ENCODE measurements at regions of chr5 and their contacts with region 1.

Region 1: DNA sequence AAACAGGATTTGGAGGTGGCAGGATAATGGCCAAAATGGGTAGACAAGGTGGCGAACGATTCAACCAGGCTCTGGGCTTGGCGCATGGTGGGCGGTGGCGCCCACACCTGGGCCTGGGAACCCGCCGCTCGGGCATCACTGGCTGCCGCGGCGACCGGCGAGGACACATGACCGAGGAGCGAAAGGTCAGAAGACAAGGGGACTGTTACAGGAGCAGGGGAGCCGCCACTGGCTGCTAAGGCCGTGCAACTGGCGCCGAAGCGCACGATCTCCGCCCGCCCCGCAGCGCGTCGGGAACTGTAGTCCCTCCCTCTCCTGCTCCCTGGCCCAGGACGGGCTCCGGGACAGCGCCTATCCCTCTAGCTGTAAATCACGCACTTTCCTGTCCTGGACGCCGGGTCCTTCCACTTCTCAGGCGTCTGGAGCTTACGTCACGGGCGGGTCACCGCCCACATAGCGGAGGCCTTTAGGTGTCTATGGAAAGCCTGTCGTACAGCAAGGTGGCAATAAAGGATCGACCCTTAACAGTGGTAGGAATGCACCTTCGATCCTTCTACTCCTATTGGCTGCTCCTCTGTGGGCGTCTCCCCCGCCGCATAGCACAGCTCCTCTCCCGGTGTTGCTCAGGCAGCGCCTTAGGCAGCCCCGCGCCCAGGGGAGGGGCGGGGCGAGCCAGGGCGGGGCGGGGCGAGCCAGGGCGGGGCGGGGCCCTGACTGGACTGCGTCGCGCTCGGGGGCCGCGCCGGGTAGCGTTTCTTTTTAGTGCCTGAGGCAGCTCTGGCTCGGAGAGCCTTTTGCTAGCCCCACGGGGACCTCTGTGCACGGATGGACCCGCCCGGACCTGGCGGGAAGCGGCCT is at the start of gene ICE1:
- DNase-seq: peak; percentile 98
- H3K4me3 Mint-ChIP-seq: no peak within 1 kb of the TSS
- H3K27ac Mint-ChIP-seq: no peak within 1 kb of the TSS
- H3K4me1 Mint-ChIP-seq: peaks cover 11% of the 10 kb centered on the region
- H3K27me3 Mint-ChIP-seq: no peaks in the 10 kb centered on the region
- CTCF ChIP-seq: no peak
- total RNA-seq, gene ICE1: 25.7 and 28.4 TPM in 2 replicates

Region 2: GRCh38 chr5:4661836-4662235 is 760.4 kb before region 1 on chr5:
- CTCF ChIA-PET with region 1: no interaction called
- POLR2A ChIA-PET with region 1: no interaction called
- intact Hi-C with region 1: no loop called
- DNase-seq: no peak
- H3K4me3 Mint-ChIP-seq: no peak overlapping the region
- H3K27ac Mint-ChIP-seq: no peak overlapping the region
- H3K4me1 Mint-ChIP-seq: no peaks in the 10 kb centered on the region
- H3K27me3 Mint-ChIP-seq: no peaks in the 10 kb centered on the region
- CTCF ChIP-seq: no peak

Region 3: DNA sequence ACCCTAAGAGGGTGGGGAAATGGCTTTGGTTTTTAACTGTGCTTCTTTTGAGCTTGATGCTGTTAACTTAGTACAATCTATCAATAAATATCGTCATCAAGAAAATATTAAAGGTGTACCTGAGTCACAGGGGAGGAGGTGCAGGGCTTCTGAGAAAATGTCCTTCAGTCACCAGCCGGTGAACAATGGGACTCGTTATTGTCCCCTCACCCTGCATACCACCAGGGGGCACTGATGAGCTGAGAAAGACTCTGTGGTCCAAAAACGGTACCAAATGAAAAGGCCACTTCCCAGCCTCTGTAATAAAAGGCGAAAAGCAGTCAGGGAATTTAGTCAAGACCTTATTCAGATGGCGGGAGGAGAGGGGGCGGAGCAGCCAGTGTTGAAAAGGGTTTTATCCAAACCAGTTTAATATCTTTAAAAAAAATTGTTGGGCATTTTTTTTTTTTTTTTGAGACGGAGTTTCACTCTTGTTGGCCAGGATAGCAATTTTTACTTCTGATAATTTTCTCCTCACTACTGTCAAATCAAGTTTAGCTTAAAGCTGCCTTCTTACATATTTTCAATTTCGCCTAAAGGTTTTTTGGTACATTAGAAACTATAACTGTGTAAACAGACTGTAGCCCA is 554.0 kb before region 1 on chr5:
- CTCF ChIA-PET with region 1: interaction called, 18 read pairs
- POLR2A ChIA-PET with region 1: no interaction called
- intact Hi-C with region 1: loop called (anchors 1 kb)
- DNase-seq: peak; percentile 71
- H3K4me3 Mint-ChIP-seq: peak overlapping the region; percentile 35
- H3K27ac Mint-ChIP-seq: no peak overlapping the region
- H3K4me1 Mint-ChIP-seq: peaks cover 8% of the 10 kb centered on the region
- H3K27me3 Mint-ChIP-seq: no peaks in the 10 kb centered on the region
- CTCF ChIP-seq: peak; percentile 81

Region 4: GRCh38 chr5:5126444-5126843 is 295.7 kb before region 1 on chr5:
- CTCF ChIA-PET with region 1: interaction called, 3 read pairs
- POLR2A ChIA-PET with region 1: interaction called, 3 read pairs
- intact Hi-C with region 1: loop called (anchors 5 kb)
- DNase-seq: peak; percentile 95
- H3K4me3 Mint-ChIP-seq: no peak overlapping the region
- H3K27ac Mint-ChIP-seq: peak overlapping the region; percentile 46
- H3K4me1 Mint-ChIP-seq: peaks cover 12% of the 10 kb centered on the region
- H3K27me3 Mint-ChIP-seq: no peaks in the 10 kb centered on the region
- CTCF ChIP-seq: no peak

Region 5: GRCh38 chr5:5340206-5340729 is 81.9 kb before region 1 on chr5:
- CTCF ChIA-PET with region 1: interaction called, 3 read pairs
- POLR2A ChIA-PET with region 1: no interaction called
- intact Hi-C with region 1: loop called (anchors 2 kb)
- DNase-seq: peak; percentile 97
- H3K4me3 Mint-ChIP-seq: peak overlapping the region; percentile 32
- H3K27ac Mint-ChIP-seq: peak overlapping the region; percentile 40
- H3K4me1 Mint-ChIP-seq: peaks cover 50% of the 10 kb centered on the region
- H3K27me3 Mint-ChIP-seq: no peaks in the 10 kb centered on the region
- CTCF ChIP-seq: peak; percentile 59

Region 6: DNA sequence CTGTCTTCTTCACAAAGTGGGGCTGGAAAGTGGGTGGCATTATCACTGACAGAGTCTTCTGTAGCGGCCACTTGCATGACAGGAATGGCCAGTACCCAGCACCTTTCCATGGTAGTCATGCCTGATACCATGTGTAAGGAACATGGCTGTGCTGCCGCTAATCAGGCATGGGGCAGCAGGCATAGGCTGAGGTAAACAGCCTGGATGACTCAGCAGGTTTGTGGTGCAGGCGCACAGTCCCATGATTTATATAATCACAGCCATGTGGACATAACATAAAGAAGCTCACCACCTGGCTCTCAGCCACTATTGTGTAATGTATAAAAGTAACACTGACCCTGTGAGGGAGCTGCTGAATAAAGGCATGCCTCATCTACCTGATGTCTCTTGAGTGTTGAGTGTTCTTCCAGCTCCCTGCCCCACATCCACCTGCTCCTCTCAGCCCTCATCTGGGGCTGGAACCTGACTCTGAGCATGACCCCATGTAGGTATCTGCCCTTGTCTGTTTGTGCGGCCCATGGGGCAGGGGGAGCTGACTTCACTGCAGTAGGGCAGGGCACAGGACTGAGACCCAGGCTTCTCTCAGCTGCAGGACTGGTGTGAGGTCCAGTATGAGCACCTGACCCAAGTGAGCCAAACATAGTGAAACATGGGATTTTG is 12.9 kb before region 1 on chr5:
- CTCF ChIA-PET with region 1: interaction called, 20 read pairs
- POLR2A ChIA-PET with region 1: interaction called, 7 read pairs
- intact Hi-C with region 1: no loop called
- DNase-seq: peak; percentile 76
- H3K4me3 Mint-ChIP-seq: no peak overlapping the region
- H3K27ac Mint-ChIP-seq: no peak overlapping the region
- H3K4me1 Mint-ChIP-seq: no peaks in the 10 kb centered on the region
- H3K27me3 Mint-ChIP-seq: no peaks in the 10 kb centered on the region
- CTCF ChIP-seq: no peak

Region 7: DNA sequence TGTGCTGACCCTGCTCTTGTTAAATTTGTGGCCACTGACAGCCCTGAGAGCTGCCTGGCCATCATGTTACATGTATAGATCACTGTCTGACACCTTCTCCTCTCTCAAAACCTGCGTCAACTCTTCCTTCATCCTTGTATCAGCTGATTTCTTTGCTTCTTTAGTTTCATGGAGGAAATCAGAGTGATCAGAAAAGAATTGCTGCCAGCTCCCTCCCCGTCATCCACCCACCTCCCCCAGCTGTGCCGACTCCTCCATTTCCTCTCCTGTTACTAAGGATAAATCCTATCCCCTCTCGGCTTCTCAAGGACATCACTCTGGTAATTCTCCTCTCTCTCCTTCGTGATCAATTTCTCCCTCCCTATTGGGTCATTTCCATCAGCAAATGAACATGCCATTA is 109.2 kb after region 1 on chr5:
- CTCF ChIA-PET with region 1: no interaction called
- POLR2A ChIA-PET with region 1: no interaction called
- intact Hi-C with region 1: no loop called
- DNase-seq: no peak
- H3K4me3 Mint-ChIP-seq: no peak overlapping the region
- H3K27ac Mint-ChIP-seq: no peak overlapping the region
- H3K4me1 Mint-ChIP-seq: no peaks in the 10 kb centered on the region
- H3K27me3 Mint-ChIP-seq: peaks cover 25% of the 10 kb centered on the region
- CTCF ChIP-seq: no peak

Measured in MCF 10A (cell line).